ENCODE measurements at regions of chr19 and their contacts with region 1.

Region 1: GRCh38 chr19:12983542-12984142 is 11.6 kb upstream of the NFIX start:
- DNase-seq: peak; percentile 70
- ATAC-seq: peak; percentile 94
- H3K4me3 ChIP-seq: peak overlapping the region; percentile 42
- H3K27ac ChIP-seq: no peak overlapping the region
- H3K4me1 ChIP-seq: peaks cover 3% of the 10 kb centered on the region; the same call in 1 of the 2 replicates
- H3K27me3 ChIP-seq: no peaks in the 10 kb centered on the region
- CTCF ChIP-seq: peak; percentile 97
- POLR2A ChIP-seq: no peak
- RAD21 ChIP-seq: peak; percentile 88

Region 2: GRCh38 chr19:12956446-12957388 is 26.9 kb before region 1 on chr19 and contains the start of gene GADD45GIP1:
- CTCF ChIA-PET with region 1: no interaction called
- POLR2A ChIA-PET with region 1: no interaction called
- dilution Hi-C with region 1: no loop called
- in situ Hi-C with region 1: no loop called
- intact Hi-C with region 1: no loop called
- DNase-seq: peak; percentile 69
- ATAC-seq: peak; percentile 93
- H3K4me3 ChIP-seq: peak within 1 kb of the TSS; percentile 98
- H3K27ac ChIP-seq: peak within 1 kb of the TSS; percentile 88
- H3K4me1 ChIP-seq: peaks cover 25% of the 10 kb centered on the region
- H3K27me3 ChIP-seq: no peaks in the 10 kb centered on the region
- CTCF ChIP-seq: no peak
- POLR2A ChIP-seq: peak; percentile 92
- RAD21 ChIP-seq: no peak
- total RNA-seq, gene GADD45GIP1: 13.3 and 22.5 TPM in 2 replicates

Region 3: GRCh38 chr19:13022859-13023636 is 39.4 kb after region 1 on chr19:
- CTCF ChIA-PET with region 1: no interaction called
- POLR2A ChIA-PET with region 1: no interaction called
- dilution Hi-C with region 1: no loop called
- in situ Hi-C with region 1: no loop called
- intact Hi-C with region 1: no loop called
- DNase-seq: peak; percentile 95
- ATAC-seq: peak; percentile 75
- H3K4me3 ChIP-seq: peak overlapping the region; percentile 55
- H3K27ac ChIP-seq: peak overlapping the region; percentile 92
- H3K4me1 ChIP-seq: peaks cover 45% of the 10 kb centered on the region
- H3K27me3 ChIP-seq: no peaks in the 10 kb centered on the region
- CTCF ChIP-seq: no peak
- POLR2A ChIP-seq: no peak
- RAD21 ChIP-seq: no peak

Region 4: GRCh38 chr19:13033819-13034611 is 50.4 kb after region 1 on chr19:
- CTCF ChIA-PET with region 1: no interaction called
- POLR2A ChIA-PET with region 1: no interaction called
- dilution Hi-C with region 1: no loop called
- in situ Hi-C with region 1: no loop called
- intact Hi-C with region 1: loop called (anchors 5 kb)
- DNase-seq: peak; percentile 45
- ATAC-seq: peak; percentile 38; the same call in 1 of the 2 replicates
- H3K4me3 ChIP-seq: no peak overlapping the region
- H3K27ac ChIP-seq: no peak overlapping the region
- H3K4me1 ChIP-seq: peaks cover 45% of the 10 kb centered on the region
- H3K27me3 ChIP-seq: no peaks in the 10 kb centered on the region
- CTCF ChIP-seq: peak; percentile 66
- POLR2A ChIP-seq: no peak
- RAD21 ChIP-seq: peak; percentile 61

Region 5: DNA sequence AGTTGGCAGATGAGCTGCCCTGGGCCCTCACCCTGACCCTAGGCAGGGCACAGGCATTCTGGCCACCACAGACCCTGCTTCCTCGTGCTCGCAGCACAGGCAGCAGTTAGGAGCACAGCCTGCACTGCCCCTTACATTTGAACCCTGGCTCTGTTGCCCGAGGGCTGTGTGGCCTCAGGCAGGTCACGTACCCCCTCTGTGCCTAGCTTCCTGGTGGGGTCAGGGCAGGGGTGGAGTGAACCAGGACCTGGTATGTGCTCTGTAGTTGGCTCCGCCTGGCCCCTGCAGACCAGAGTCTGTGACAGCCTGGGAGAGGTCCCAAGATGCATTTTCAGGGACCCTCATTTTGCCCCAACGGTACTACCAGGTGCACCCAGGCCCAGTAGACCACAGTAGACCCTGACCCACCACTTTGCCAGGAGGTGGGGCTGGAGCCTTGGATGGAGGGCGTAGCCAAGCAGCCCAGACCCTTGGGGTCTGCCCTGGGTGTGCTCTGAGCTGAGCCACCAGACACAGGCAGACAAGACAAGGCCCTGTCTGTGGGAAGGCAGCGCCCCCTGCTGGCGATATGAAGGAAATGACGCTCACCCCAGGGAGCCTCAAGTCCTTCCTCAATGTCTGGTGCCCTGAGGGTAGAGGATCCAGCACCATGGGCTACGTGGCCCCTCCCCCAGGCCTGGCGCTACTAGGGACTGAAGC is 109.9 kb after region 1 on chr19:
- CTCF ChIA-PET with region 1: interaction called, 3 read pairs
- POLR2A ChIA-PET with region 1: no interaction called
- dilution Hi-C with region 1: no loop called
- in situ Hi-C with region 1: loop called (anchors 5 kb)
- intact Hi-C with region 1: loop called (anchors 1 kb)
- DNase-seq: peak; percentile 78
- ATAC-seq: peak; percentile 89
- H3K4me3 ChIP-seq: no peak overlapping the region
- H3K27ac ChIP-seq: no peak overlapping the region
- H3K4me1 ChIP-seq: peaks cover 11% of the 10 kb centered on the region; the same call in 1 of the 2 replicates
- H3K27me3 ChIP-seq: no peaks in the 10 kb centered on the region
- CTCF ChIP-seq: peak; percentile 93
- POLR2A ChIP-seq: 0 out of 2 replicates have a peak, but pooled peaks have one; percentile 32
- RAD21 ChIP-seq: peak; percentile 97

Region 6: DNA sequence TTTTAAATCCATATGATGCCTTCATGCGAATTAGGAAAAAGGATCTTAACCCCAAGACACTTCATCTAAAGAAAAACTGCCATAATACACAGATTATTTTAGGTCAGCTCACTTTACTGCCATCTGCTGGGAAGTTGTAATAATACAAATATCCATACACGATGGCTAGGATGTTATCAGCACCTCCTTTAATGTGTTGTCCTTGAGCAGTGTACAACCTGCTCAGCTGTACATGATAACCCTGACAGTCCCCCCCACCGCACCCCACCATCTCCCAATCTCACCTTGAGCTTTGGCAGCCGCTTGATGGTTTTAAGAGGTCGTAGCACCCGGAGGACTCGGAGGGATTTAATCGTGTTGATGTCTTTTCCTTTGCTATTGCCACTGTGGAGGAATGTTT is 278.8 kb after region 1 on chr19:
- CTCF ChIA-PET with region 1: no interaction called
- POLR2A ChIA-PET with region 1: no interaction called
- dilution Hi-C with region 1: no loop called
- in situ Hi-C with region 1: loop called (anchors 5 kb)
- intact Hi-C with region 1: loop called (anchors 1 kb)
- DNase-seq: peak; percentile 61
- ATAC-seq: peak; percentile 88
- H3K4me3 ChIP-seq: no peak overlapping the region
- H3K27ac ChIP-seq: no peak overlapping the region
- H3K4me1 ChIP-seq: peaks cover 6% of the 10 kb centered on the region
- H3K27me3 ChIP-seq: peaks cover 3% of the 10 kb centered on the region
- CTCF ChIP-seq: peak; percentile 66
- POLR2A ChIP-seq: no peak
- RAD21 ChIP-seq: peak; percentile 67

Measured in IMR-90 (cell line).